HCT116 (cell line): ENCODE measurements at regions of chr4 and their contacts with region 1.

Region 1: GRCh38 chr4:30948653-30949052 is 228.5 kb downstream of the PCDH7 start:
- DNase-seq: peak; percentile 90
- ATAC-seq: peak; percentile 58
- H3K4me3 ChIP-seq: no peak overlapping the region
- H3K27ac ChIP-seq: peak overlapping the region; percentile 94
- H3K4me1 ChIP-seq: peaks cover 77 to 99% of the 10 kb centered on the region in 2 experiments
- H3K27me3 ChIP-seq: no peaks in the 10 kb centered on the region
- CTCF ChIP-seq: no peak
- POLR2A ChIP-seq: no peak
- RAD21 ChIP-seq: peak; percentile 47

Region 2: GRCh38 chr4:30870513-30870912 is 78.1 kb before region 1 on chr4:
- CTCF ChIA-PET with region 1: no interaction called
- POLR2A ChIA-PET with region 1: no interaction called
- RAD21 ChIA-PET with region 1: no interaction called
- intact Hi-C with region 1: loop called (anchors 2 kb)
- DNase-seq: peak; percentile 65
- ATAC-seq: peak; percentile 50
- H3K4me3 ChIP-seq: no peak overlapping the region
- H3K27ac ChIP-seq: peak overlapping the region; percentile 100
- H3K4me1 ChIP-seq: peaks cover 74 to 81% of the 10 kb centered on the region in 2 experiments
- H3K27me3 ChIP-seq: no peaks in the 10 kb centered on the region
- CTCF ChIP-seq: no peak
- POLR2A ChIP-seq: no peak
- RAD21 ChIP-seq: no peak

Region 3: DNA sequence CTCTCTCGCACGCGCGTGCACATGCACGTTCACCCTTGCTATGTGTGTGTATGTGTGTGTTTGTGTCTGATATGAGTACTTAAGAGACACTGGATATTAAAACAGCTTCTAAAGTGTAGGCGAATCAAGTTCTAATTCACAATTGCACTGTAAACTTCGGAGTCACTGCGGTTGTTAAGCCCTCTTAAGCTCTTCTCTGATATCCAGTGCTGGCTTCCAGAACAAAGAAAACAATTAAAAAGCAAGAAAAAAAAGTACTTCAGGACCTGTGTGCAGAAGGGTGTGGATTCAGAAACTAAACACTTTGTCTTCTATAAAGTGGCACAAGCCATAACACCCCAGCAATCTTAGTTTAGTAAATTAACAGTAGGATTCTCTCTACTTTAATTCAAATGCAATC is 71.7 kb after region 1 on chr4:
- CTCF ChIA-PET with region 1: no interaction called
- POLR2A ChIA-PET with region 1: no interaction called
- RAD21 ChIA-PET with region 1: no interaction called
- intact Hi-C with region 1: loop called (anchors 5 kb)
- DNase-seq: no peak
- ATAC-seq: peak; percentile 38
- H3K4me3 ChIP-seq: peak overlapping the region in 1 of 2 experiments; percentile 24; a peak in 2 of 4 replicates
- H3K27ac ChIP-seq: peak overlapping the region; percentile 91
- H3K4me1 ChIP-seq: peaks cover 95% of the 10 kb centered on the region in 2 experiments
- H3K27me3 ChIP-seq: no peaks in the 10 kb centered on the region
- CTCF ChIP-seq: no peak
- POLR2A ChIP-seq: no peak
- RAD21 ChIP-seq: no peak

Region 4: GRCh38 chr4:31037703-31038102 is 89.0 kb after region 1 on chr4:
- CTCF ChIA-PET with region 1: no interaction called
- POLR2A ChIA-PET with region 1: no interaction called
- RAD21 ChIA-PET with region 1: no interaction called
- intact Hi-C with region 1: loop called (anchors 5 kb)
- DNase-seq: no peak
- ATAC-seq: no peak
- H3K4me3 ChIP-seq: no peak overlapping the region
- H3K27ac ChIP-seq: peak overlapping the region; percentile 86
- H3K4me1 ChIP-seq: peaks cover 89 to 97% of the 10 kb centered on the region in 2 experiments
- H3K27me3 ChIP-seq: no peaks in the 10 kb centered on the region
- CTCF ChIP-seq: no peak
- POLR2A ChIP-seq: no peak
- RAD21 ChIP-seq: no peak

Region 5: GRCh38 chr4:31234494-31234893 is 285.8 kb after region 1 on chr4:
- CTCF ChIA-PET with region 1: no interaction called
- POLR2A ChIA-PET with region 1: no interaction called
- RAD21 ChIA-PET with region 1: no interaction called
- intact Hi-C with region 1: loop called (anchors 5 kb)
- DNase-seq: peak; percentile 45
- ATAC-seq: peak; percentile 71
- H3K4me3 ChIP-seq: no peak overlapping the region
- H3K27ac ChIP-seq: peak overlapping the region; percentile 89
- H3K4me1 ChIP-seq: peaks cover 52 to 66% of the 10 kb centered on the region in 2 experiments
- H3K27me3 ChIP-seq: no peaks in the 10 kb centered on the region
- CTCF ChIP-seq: no peak
- POLR2A ChIP-seq: no peak
- RAD21 ChIP-seq: no peak; the same call in 1 of the 2 replicates